Mammary epithelial cell (primary cell): ENCODE measurements at regions of chr4 and their contacts with region 1.

Region 1: DNA sequence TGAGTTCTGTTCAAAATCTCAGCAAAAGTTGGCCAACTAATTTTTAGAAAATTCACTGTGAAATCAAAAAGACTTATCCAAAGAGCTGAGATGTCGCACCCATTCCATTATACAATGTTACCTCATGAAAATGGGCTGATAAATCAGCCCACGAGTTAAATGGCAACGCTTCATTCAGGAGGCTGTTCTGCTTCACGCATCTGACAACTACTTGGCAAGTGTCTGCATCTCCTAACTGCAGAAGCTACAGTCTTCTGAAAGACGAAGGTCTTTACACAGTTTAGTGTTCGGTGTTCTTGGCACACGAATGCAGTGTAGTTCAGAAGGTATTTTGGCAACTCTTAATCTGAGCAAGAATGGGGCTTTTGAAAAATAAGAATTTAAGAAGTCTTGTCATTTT is 166.6 kb upstream of the DKK2 start:
- DNase-seq: no peak
- H3K4me3 ChIP-seq: no peak overlapping the region
- H3K27ac ChIP-seq: no peak overlapping the region
- H3K4me1 ChIP-seq: peaks cover 5% of the 10 kb centered on the region
- H3K27me3 ChIP-seq: no peaks in the 10 kb centered on the region
- CTCF ChIP-seq: no peak

Region 2: GRCh38 chr4:107283587-107284559 is 81.1 kb after region 1 on chr4:
- CTCF ChIA-PET with region 1: no interaction called
- dilution Hi-C with region 1: loop called (anchors 5 kb)
- in situ Hi-C with region 1: no loop called
- intact Hi-C with region 1: no loop called
- DNase-seq: peak; percentile 88
- H3K4me3 ChIP-seq: no peak overlapping the region
- H3K27ac ChIP-seq: peak overlapping the region; percentile 30
- H3K4me1 ChIP-seq: peaks cover 21% of the 10 kb centered on the region
- H3K27me3 ChIP-seq: no peaks in the 10 kb centered on the region
- CTCF ChIP-seq: no peak

Region 3: DNA sequence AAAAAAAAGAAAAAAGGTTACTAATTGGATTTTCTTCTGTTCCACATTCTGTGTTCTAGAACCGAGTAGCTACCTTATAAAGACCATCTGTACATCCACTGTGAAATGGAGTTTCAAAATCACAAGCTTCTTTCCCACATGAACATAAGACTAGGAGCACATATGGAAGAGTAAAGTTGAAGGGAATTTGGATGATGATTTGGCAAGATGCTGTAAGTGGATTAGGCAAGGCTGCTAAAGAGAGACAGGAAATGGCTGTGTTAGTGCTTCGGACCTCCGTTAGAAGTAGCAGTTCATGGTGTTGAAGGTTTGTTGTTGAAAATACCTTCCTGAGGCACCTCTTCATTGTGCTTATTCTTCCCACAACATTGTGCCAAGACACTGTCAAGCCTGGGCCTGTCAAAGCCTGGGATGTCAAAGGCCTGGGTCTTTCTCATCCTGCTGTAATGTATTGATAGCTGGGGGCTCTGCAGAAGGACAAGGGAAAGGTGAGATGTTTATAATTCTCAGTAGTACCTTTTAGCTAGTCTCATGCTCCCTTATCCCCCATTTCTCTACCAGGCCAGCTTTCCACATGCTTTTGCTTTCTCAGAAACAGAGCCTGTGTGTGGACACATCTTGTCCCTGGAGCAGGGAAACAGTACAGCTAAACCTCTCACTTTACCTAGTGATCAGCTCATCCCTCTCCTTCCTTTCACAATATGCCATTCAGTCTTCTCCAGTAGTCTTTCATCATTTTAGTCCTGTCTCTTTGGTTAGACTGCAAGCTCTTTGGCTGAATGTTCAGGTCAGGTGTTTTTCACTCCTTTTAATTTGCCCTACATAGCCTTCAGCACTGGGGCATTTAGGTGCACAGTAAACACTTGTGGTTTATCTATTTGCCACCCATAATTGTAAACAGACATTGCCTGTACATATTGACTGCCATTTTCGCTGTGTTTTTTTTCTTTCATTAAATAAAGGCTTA is 690.7 kb after region 1 on chr4:
- CTCF ChIA-PET with region 1: no interaction called
- dilution Hi-C with region 1: no loop called
- in situ Hi-C with region 1: no loop called
- intact Hi-C with region 1: no loop called
- DNase-seq: peak; percentile 38
- H3K4me3 ChIP-seq: no peak overlapping the region
- H3K27ac ChIP-seq: peak overlapping the region; percentile 67
- H3K4me1 ChIP-seq: peaks cover 49% of the 10 kb centered on the region
- H3K27me3 ChIP-seq: no peaks in the 10 kb centered on the region
- CTCF ChIP-seq: no peak